Activated CD4-positive, alpha-beta T cell treated with anti-CD3 and anti-CD28 coated beads for 36 hours (primary cell): ENCODE measurements at regions of chr6 and their contacts with region 1.

Region 1: DNA sequence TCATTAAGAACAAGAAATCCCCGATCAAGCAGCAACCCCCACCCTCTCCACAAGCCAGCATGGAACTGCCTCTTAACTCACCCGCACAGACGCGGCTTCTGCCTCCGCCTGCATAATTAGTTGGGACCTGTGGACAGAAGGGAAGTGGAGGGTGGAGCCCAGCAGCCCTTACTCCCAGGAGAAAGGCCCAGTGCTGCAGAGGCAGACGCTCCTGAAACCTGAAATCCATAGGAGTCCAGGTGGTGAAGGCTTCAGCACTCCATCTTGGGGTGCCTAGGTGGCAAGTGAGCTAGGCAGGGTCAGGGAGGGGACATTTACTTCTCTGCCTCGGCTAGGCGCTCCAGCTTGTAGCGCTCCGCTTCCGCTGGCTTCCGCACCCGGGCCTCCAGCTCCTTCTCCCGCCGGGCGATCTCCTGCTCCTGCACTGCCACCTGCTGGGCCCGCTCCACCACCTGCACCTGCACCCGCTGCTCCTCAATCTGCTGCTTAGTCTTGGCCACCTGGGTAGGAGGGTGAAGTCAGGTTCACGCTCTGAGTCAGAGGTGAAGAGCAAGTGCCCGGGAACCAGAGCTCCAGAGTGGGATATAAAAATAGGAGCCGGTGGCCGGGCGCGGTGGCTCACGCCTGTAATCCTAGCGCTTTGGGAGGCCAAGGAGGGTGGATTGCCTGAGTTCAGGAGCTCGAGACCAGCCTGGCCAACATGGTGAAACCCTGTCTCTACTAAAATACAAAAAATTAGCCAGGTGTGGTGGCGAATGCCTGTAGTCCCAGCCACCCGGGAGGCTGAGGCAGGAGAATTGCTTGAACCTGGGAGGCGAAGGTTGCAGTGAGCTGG is 10.7 kb downstream of the TUBB start:
- DNase-seq: peak; percentile 94
- ATAC-seq: peak; percentile 75
- H3K4me3 Mint-ChIP-seq: peak overlapping the region; percentile 51
- H3K27ac Mint-ChIP-seq: peak overlapping the region; percentile 65
- H3K4me1 Mint-ChIP-seq: peaks cover 44% of the 10 kb centered on the region
- H3K27me3 Mint-ChIP-seq: no peaks in the 10 kb centered on the region

Region 2: GRCh38 chr6:30272017-30272416 is 458.8 kb before region 1 on chr6:
- CTCF ChIA-PET with region 1: no interaction called
- POLR2A ChIA-PET with region 1: no interaction called
- intact Hi-C with region 1: no loop called
- DNase-seq: no peak
- ATAC-seq: no peak
- H3K4me3 Mint-ChIP-seq: no peak overlapping the region
- H3K27ac Mint-ChIP-seq: no peak overlapping the region
- H3K4me1 Mint-ChIP-seq: no peaks in the 10 kb centered on the region
- H3K27me3 Mint-ChIP-seq: peaks cover 8% of the 10 kb centered on the region

Region 3: GRCh38 chr6:30483677-30484279 is 247.0 kb before region 1 on chr6:
- CTCF ChIA-PET with region 1: interaction called, 7 read pairs
- POLR2A ChIA-PET with region 1: no interaction called
- intact Hi-C with region 1: loop called in 1 of 2 experiments (anchors 5 kb)
- DNase-seq: no peak
- ATAC-seq: no peak
- H3K4me3 Mint-ChIP-seq: no peak overlapping the region
- H3K27ac Mint-ChIP-seq: no peak overlapping the region
- H3K4me1 Mint-ChIP-seq: peaks cover 39% of the 10 kb centered on the region
- H3K27me3 Mint-ChIP-seq: peaks cover 28% of the 10 kb centered on the region

Region 4: DNA sequence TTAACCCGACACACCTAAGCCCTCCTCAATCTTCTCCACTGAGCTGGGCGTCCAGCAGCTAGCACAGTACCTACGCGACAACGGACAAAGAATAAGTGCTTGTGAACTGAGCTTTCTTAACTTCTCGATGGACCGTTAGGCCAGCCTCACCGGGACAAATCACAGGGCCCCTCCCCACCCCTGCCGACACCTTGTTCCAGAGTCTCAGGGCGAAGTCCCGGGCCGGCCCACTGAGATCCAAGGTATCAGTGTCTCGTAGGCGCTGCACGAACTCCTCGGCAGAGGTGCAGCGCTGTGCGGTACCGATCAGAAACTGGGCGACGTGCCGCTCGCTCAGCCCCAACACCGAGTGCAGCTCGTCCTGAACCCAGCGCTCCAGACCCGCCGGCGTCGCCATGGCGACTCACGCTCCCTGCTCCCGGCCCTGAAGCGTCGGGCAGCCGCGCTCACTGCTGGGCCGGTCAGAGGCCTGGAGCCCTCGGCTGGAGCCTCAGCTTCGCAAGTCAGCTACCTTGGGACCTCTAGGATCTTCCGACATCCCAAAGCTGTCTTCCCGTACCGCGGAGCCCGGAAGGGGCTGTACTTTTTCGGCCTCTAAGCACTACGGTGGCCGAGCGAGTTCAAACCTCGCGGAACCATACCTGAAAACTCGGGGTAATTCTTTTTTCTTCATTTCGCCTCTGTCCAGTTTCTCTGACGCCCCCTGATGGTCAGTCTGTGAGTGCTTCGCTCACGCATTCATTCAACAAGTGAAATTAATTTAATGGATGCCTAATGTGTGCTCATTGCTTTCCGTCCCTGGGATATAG is 58.2 kb before region 1 on chr6 and contains the start of gene DHX16:
- CTCF ChIA-PET with region 1: interaction called, 12 read pairs
- POLR2A ChIA-PET with region 1: no interaction called
- intact Hi-C with region 1: no loop called
- DNase-seq: peak; percentile 93
- ATAC-seq: peak; percentile 83
- H3K4me3 Mint-ChIP-seq: peak within 1 kb of the TSS; percentile 82
- H3K27ac Mint-ChIP-seq: peak within 1 kb of the TSS; percentile 83
- H3K4me1 Mint-ChIP-seq: peaks cover 27% of the 10 kb centered on the region
- H3K27me3 Mint-ChIP-seq: no peaks in the 10 kb centered on the region
- total RNA-seq, gene DHX16: 34.5 to 36.7 TPM

Region 5: DNA sequence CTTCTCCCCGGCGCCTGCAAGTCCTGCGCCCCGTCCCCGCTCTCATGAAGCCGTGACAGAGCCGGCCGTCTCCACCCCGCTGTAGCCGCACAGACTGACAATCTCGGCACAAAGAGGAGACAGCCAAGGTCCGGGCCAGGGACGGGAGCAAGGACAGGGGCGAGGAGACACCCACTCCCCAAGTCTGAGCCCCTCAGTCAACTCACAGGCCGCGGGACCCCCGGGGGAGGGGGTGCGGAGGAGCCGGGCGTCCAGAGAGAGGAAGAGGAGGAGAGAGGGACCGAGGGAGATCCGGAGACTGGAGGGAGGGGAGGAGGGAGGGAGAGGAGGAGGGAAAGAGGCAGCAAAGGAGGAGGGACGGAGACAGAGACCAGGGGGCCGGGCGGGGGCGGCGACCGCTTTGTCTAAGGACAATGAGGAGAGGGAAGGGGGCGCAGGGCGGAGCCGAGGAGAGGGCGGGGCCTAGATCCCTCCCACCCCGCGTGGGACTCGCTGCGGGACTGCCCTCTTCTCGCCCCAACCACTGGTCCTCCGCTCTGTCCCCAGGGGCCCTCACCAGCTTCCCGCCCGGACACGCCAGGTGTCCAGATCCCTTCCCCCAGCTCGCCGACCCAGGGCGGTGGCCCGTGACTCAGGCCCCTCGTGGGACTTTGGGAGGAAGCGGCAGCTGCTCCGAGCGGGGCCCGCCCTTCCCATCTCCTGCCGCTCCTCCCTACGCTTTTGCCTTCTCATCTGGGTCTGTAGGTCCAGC is 43.7 kb before region 1 on chr6:
- CTCF ChIA-PET with region 1: interaction called, 39 read pairs
- POLR2A ChIA-PET with region 1: interaction called, 6 read pairs
- intact Hi-C with region 1: no loop called
- DNase-seq: peak; percentile 90
- ATAC-seq: peak; percentile 20
- H3K4me3 Mint-ChIP-seq: peak overlapping the region; percentile 100
- H3K27ac Mint-ChIP-seq: peak overlapping the region; percentile 89
- H3K4me1 Mint-ChIP-seq: peaks cover 42% of the 10 kb centered on the region
- H3K27me3 Mint-ChIP-seq: no peaks in the 10 kb centered on the region

Region 6: DNA sequence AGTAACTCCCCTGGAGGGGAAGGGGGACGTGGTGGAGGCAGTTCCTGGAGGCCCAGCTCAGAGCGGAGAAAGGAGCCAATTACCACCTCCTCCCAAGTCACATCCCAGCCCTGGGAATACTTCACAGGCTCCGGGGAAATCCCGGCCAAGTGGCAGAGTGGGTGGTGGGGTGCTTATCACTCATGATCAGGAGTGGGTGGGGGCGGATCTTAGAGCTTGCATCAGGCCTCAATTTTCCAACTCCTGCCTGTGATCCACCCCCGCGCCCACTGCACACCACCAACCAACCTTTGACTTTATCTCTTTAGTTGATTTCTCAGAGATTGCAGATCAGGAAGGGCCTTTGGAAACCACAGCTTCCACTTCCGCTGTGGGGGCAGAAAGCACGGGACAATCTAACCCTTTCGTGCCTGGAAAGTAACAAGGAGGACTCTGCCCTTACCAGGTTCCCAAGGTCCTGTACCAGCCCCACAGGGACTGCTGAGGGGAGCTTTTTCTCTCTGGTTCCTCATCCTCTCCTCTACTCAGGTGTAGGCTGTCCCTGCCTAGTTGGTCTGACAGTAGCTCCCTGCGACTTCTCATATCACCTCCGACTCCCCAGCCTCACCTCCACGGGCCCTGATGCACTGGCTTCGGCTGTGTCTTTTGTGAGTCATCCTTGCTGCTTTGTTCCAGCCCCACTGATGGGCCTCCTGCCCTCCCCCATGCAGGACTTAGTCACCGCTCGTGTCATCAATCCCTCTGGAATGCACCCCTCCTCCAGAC is 38.5 kb after region 1 on chr6:
- CTCF ChIA-PET with region 1: interaction called, 9 read pairs
- POLR2A ChIA-PET with region 1: interaction called, 15 read pairs
- intact Hi-C with region 1: no loop called
- DNase-seq: peak; percentile 90
- ATAC-seq: peak; percentile 75
- H3K4me3 Mint-ChIP-seq: peak overlapping the region; percentile 63
- H3K27ac Mint-ChIP-seq: peak overlapping the region; percentile 98
- H3K4me1 Mint-ChIP-seq: peaks cover 86% of the 10 kb centered on the region
- H3K27me3 Mint-ChIP-seq: no peaks in the 10 kb centered on the region

Region 7: DNA sequence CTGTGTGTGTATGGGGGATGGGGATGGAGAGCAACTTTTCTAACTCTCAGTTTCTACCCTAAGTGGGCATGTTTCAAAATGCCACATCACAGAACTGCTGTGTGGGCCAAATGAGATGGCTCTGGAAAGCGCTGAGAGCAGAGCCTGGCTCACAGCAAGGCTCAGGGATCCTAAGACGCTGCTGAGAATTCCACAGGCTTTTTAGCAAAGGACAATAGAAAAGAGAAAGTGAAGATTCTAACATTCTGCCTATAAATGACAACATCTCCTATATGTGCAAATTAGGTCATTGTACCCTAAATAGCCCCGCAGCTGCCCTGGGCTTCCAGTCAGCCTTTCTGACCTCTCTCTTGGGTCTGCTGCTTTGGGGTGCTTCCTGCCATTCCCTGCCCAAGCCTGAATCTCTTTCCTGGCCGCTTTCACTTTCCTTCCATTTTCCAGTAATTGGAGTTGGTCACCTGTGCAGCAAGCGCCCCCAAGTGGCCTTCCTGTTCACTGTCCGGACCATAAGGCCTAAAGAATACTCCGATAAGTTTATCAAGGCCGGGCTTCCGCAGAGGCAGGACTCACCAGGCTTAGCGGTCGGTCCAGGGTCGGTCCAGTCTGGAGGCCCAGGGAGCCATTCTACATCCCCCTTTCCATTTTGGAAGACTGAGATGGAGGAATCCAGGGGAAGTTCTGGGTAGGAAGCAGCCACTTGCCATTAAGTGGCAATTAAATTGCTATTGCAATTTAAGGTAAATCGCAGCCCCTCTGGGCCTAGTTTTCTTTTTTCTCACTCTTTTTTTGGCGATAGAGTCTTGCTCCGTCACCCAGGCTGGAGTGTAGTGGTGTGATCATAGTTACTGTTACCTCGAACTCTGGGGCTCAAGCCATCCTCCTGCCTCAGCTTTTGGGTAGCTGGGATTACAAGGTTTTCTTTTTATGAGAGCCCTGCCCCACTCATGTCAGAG is 146.9 kb after region 1 on chr6:
- CTCF ChIA-PET with region 1: interaction called, 5 read pairs
- POLR2A ChIA-PET with region 1: interaction called, 3 read pairs
- intact Hi-C with region 1: loop called in 1 of 2 experiments (anchors 2 kb)
- DNase-seq: peak; percentile 86
- ATAC-seq: peak; percentile 84
- H3K4me3 Mint-ChIP-seq: peak overlapping the region; percentile 64
- H3K27ac Mint-ChIP-seq: peak overlapping the region; percentile 85
- H3K4me1 Mint-ChIP-seq: peaks cover 24% of the 10 kb centered on the region
- H3K27me3 Mint-ChIP-seq: no peaks in the 10 kb centered on the region